Gastrocnemius medialis (tissue), 4 donors: ENCODE measurements at regions of chr13 and their contacts with region 1.

Region 1: DNA sequence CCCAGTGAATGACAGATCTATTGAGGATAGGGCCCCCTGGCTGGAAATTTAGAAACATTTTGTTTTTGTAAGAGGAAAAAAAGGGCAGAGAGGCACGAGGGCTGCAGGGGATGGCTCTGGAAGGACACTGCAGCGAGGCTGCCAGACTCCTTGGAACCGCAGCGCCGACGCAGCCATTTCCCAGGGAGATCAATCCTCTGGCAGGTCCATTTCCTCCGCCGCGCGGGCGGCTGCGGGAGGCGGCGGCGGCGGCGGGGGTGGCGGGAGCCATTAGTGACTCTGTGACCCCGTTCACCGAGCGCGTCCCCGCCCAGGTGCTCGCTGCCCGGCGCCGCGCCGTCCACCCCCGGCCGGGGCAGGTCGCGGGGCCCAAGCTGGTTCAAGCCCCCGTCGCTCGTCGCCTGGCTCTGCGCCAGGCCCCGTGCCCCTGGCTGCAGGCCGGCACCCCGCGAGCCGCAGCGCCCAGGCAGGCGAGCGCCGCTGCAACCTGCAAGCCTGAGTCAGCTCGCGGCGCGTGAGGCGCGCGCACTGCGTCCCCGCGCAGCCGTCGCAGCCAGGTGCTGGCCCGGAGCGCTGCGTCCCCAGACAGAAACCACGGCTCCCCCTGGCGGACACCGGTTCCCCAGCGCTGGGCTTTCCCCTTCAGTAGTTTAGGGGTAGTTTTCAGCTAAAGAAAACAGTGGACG is 192.6 kb downstream of the KATNAL1 start:
- DNase-seq: peak; percentile 71 to 79
- ATAC-seq: peak; percentile 80 to 83
- H3K4me3 ChIP-seq: peak overlapping the region; percentile 38 to 68 (median 48)
- H3K27ac ChIP-seq: peak overlapping the region; percentile 48 to 69 (median 60)
- H3K4me1 ChIP-seq: peaks cover 6 to 13% of the 10 kb centered on the region in 2 donors
- H3K27me3 ChIP-seq: no peaks in the 10 kb centered on the region
- CTCF ChIP-seq: peak; percentile 85 to 92 (median 90)
- POLR2A ChIP-seq: no peak

Region 2: GRCh38 chr13:29196409-29197074 is 918.2 kb before region 1 on chr13:
- in situ Hi-C with region 1: no loop called
- intact Hi-C with region 1: no loop called
- DNase-seq: no peak
- ATAC-seq: no peak
- H3K4me3 ChIP-seq: no peak overlapping the region
- H3K27ac ChIP-seq: no peak overlapping the region
- H3K4me1 ChIP-seq: no peaks in the 10 kb centered on the region
- H3K27me3 ChIP-seq: no peaks in the 10 kb centered on the region
- CTCF ChIP-seq: no peak
- POLR2A ChIP-seq: no peak

Region 3: DNA sequence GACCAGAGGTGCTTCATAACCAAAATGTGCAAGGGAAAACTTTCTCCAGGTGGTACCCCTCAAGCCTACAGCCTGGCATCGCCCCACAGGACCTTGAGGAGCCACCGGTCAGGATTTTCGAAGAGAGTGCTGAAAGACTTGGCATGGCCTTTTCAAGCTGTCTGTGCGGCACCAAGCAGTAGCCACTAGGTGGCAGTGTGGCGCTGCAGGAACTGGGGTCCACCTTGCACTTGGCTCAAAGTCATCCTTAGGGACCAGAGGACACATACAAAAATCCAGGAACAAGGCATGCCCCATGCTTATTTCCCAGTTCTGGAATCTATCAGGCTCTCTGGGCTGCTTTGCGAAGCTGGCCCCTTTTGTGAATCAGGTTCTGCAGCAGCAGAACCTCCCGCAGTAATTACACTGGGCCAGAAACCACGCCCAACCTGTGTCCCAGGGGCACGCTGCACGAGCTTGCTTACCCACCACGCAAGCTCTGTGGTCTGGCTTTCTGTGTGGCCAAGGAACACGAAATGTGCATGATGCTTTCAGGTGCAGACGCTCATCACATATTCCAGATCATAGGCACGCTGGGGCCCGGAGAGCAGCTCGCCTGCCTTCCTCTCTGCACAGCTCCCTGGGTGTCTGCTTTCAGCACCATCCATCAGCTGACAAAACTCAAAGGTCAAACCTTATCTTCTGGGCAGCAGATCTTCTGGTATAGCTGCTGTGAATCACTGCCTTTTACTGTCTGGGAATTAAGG is 606.4 kb before region 1 on chr13:
- in situ Hi-C with region 1: loop called in 2 of 4 experiments (anchors 5 kb)
- intact Hi-C with region 1: loop called (anchors 1 kb)
- DNase-seq: peak; percentile 54 to 73
- ATAC-seq: peak; percentile 80 to 95
- H3K4me3 ChIP-seq: no peak overlapping the region
- H3K27ac ChIP-seq: no peak overlapping the region
- H3K4me1 ChIP-seq: peaks cover 0 to 3% of the 10 kb centered on the region in 2 donors
- H3K27me3 ChIP-seq: peaks cover 16 to 38% (median 18%) of the 10 kb centered on the region in 3 donors
- CTCF ChIP-seq: peak; percentile 77 to 97 (median 88)
- POLR2A ChIP-seq: no peak

Region 4: DNA sequence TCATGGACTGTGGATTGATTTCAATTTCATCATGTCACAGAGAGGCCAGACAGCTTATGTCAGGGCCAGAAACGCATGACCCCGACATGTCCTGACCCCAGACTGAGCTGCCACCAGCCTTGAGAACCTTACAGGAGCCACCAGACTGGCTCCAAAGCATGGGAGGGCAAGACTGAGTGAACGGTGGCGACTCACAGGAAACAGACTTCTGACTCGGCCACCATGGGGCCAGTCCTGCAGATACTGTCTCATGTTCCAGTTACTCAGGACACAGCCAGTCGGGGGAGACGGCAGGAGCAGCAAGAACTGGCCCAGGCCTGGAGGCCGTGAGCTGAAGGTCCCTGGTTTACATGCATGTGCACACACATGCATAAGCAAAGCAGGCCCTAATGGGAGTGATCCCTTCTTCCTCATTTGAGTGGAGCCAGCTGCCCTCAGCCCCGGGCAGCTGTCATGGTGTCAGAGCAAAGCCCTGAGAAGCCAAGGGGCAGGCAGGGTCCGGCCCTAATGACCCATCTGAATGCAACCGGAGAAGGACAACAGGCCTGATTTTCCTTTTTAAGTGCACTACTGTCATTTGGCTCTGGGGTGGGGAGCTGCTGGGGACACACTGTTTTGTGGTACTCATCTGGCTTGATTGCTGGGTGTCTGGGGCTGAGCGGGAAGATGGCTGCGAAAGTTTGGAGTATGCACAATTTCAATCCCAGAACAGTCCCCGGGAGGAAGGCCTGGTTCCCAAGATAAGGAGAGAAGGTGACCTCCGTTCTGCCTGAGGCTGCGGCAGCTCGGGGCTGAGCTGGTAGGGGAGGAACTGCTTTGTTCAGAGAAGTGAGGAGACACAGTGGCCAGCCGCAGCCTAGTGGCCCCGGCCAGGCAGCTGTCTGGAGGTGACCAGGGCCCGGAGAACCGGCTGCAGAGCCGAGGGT is 601.1 kb before region 1 on chr13:
- in situ Hi-C with region 1: loop called (anchors 5 kb)
- intact Hi-C with region 1: loop called (anchors 1 kb)
- DNase-seq: no peak
- ATAC-seq: no peak
- H3K4me3 ChIP-seq: no peak overlapping the region
- H3K27ac ChIP-seq: no peak overlapping the region
- H3K4me1 ChIP-seq: no peaks in the 10 kb centered on the region
- H3K27me3 ChIP-seq: no peaks in the 10 kb centered on the region
- CTCF ChIP-seq: no peak
- POLR2A ChIP-seq: no peak

Region 5: GRCh38 chr13:29595380-29596063 is 519.2 kb before region 1 on chr13 and contains the start of gene SLC7A1:
- in situ Hi-C with region 1: no loop called
- intact Hi-C with region 1: loop called (anchors 10 kb)
- DNase-seq: peak in 1 of 2 donors; percentile 24
- ATAC-seq: peak; percentile 72 to 81
- H3K4me3 ChIP-seq: peak within 1 kb of the TSS; percentile 54 to 74 (median 60)
- H3K27ac ChIP-seq: peak within 1 kb of the TSS; percentile 52 to 67 (median 66)
- H3K4me1 ChIP-seq: peaks cover 0 to 4% of the 10 kb centered on the region in 2 donors
- H3K27me3 ChIP-seq: peaks cover 0 to 17% (median 8%) of the 10 kb centered on the region in 3 donors
- CTCF ChIP-seq: no peak
- POLR2A ChIP-seq: peak; percentile 14 to 38
- total RNA-seq, gene SLC7A1: 1.6 to 4.6 (median 3.7) TPM

Region 6: GRCh38 chr13:29771247-29771646 is 343.5 kb before region 1 on chr13:
- in situ Hi-C with region 1: loop called (anchors 5 to 10 kb)
- intact Hi-C with region 1: loop called (anchors 1 kb)
- DNase-seq: no peak
- ATAC-seq: no peak
- H3K4me3 ChIP-seq: no peak overlapping the region
- H3K27ac ChIP-seq: no peak overlapping the region
- H3K4me1 ChIP-seq: no peaks in the 10 kb centered on the region
- H3K27me3 ChIP-seq: no peaks in the 10 kb centered on the region
- CTCF ChIP-seq: peak; percentile 28 to 60 (median 44)
- POLR2A ChIP-seq: no peak